ENCODE measurements at regions of chr12 and their contacts with region 1.

Region 1: DNA sequence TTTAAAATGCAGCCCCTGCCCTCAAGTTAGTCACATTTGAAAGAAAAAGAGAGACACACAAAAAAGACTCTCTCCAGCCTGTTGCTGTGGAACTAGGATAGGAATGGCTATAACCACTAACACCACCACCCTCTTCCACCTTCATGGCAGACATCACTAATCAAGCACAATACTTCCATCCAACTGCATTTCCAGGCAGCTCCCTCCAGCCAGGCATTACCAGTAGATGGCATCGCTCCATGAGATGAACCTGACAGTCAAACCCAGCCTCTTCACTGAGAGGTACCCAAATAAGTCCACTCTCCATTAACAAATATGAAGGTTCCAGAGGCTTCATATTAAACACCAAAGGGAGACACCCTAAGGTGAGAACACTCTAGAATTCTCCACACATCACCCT is 24.4 kb downstream of the SLC8B1 start:
- DNase-seq: no peak

Region 2: DNA sequence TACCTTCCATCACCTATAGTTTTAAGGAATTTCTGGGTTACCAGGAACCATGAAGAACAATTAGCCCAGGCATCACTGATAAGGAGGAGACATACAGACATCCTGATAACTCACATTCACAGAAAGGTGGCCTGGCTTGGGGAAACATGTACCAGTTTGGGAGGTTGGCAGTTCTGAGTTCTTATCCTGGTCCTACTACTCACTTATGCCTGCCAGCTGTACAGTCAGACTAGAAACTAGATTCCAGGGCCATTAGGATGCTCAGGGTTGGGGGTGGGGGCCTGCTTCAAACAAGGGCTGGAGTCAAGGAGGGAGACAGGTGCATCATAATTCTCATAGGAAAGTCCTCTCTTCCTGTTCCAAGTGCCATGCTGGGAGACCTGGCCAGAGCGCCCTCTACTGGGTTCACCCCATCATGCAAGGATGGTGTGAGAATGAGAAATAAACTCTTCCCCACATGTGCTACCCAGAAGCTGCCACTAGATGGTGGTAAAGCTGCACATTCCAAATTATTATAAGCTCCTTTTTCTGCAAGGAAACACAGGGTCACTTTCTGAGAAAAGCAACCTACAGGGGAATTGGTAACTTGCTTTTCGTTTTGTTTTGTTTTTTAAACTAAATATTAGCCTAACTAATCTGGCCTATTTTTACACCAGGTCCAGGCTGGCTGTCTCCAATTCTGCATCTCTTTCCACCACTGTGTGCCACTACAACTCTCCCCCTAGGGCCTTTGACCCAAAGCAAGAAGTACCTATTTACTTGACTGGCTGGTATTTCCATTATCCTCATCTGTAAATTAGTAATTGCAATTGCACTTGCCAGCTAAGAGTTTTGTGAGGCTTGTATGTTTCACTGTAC is 317.7 kb before region 1 on chr12:
- intact Hi-C with region 1: no loop called
- DNase-seq: peak in 31 of 42 donors; percentile 21 to 74 (median 52)

Region 3: GRCh38 chr12:113422030-113422885 is 111.8 kb after region 1 on chr12 and contains the start of gene SDSL:
- intact Hi-C with region 1: loop called (anchors 5 kb)
- DNase-seq: peak in 41 of 42 donors; percentile 21 to 89 (median 60)

Measured in head of caudate nucleus (tissue), 42 donors.